Common myeloid progenitor, CD34-positive (primary cell): ENCODE measurements at regions of chr3 and their contacts with region 1.

Region 1: GRCh38 chr3:158097593-158098308 is 8.5 kb downstream of the SHOX2 start:
- DNase-seq: peak; percentile 71 to 86 (median 85)
- H3K4me3 ChIP-seq: peak overlapping the region; percentile 25 to 74 (median 65)
- H3K27ac ChIP-seq: no peak overlapping the region
- H3K4me1 ChIP-seq: peaks cover 3 to 28% (median 22%) of the 10 kb centered on the region in 4 experiments
- H3K27me3 ChIP-seq: peaks cover 39 to 97% (median 65%) of the 10 kb centered on the region in 5 experiments

Region 2: DNA sequence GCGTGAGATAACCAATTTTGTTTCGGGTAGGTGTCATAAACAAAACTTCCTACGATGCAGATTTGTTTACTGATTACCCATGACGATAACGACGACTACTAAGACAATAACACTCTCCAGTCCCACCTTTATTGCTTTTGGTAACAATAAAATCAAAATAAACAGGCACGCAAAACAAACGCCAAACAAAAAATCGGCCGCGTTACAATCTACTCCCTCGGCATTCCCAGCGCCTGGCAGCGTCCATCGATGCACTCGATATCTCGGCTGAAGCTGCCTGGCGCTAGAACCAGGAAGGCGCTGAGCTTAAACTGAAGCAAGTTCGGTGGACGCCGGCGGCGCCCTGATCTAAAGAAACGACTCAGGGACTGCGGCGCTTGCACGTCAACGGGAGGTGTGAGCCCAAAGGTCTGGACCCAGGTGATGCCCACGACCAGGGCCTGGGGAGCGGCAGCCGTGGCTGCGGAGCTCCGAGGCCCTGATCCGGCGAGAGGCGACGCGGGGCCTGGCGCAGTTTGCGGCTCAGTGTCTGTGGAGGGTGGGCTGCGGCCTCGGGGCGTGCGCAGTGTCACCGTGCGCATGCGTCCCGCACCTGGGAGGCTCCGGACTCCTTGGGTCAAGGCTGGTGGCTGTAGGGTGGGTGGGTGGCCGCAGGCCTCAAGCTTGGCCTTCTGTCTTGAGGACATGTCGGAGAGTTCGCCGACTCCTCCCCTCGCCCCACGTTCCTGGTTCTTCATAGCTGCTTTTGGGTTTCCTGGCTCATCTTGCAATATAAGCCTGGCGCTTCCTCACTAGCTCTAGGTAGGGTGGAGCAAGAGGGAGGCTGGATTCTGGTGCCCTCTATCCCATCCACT is 12.3 kb after region 1 on chr3 and contains the start of gene RSRC1:
- CTCF ChIA-PET with region 1: interaction called, 30 read pairs
- POLR2A ChIA-PET with region 1: no interaction called
- DNase-seq: peak; percentile 88 to 95 (median 92)
- H3K4me3 ChIP-seq: peak within 1 kb of the TSS; percentile 76 to 99 (median 95)
- H3K27ac ChIP-seq: peak within 1 kb of the TSS; percentile 79 to 90
- H3K4me1 ChIP-seq: peaks cover 6 to 48% (median 33%) of the 10 kb centered on the region in 4 experiments
- H3K27me3 ChIP-seq: peaks cover 16 to 45% (median 28%) of the 10 kb centered on the region in 5 experiments

Region 3: GRCh38 chr3:158295771-158296170 is 198.0 kb after region 1 on chr3:
- CTCF ChIA-PET with region 1: no interaction called
- POLR2A ChIA-PET with region 1: no interaction called
- DNase-seq: no peak
- H3K4me3 ChIP-seq: no peak overlapping the region
- H3K27ac ChIP-seq: no peak overlapping the region
- H3K4me1 ChIP-seq: no peaks in the 10 kb centered on the region
- H3K27me3 ChIP-seq: no peaks in the 10 kb centered on the region